ENCODE measurements at regions of chr20 and their contacts with region 1.

Region 1: DNA sequence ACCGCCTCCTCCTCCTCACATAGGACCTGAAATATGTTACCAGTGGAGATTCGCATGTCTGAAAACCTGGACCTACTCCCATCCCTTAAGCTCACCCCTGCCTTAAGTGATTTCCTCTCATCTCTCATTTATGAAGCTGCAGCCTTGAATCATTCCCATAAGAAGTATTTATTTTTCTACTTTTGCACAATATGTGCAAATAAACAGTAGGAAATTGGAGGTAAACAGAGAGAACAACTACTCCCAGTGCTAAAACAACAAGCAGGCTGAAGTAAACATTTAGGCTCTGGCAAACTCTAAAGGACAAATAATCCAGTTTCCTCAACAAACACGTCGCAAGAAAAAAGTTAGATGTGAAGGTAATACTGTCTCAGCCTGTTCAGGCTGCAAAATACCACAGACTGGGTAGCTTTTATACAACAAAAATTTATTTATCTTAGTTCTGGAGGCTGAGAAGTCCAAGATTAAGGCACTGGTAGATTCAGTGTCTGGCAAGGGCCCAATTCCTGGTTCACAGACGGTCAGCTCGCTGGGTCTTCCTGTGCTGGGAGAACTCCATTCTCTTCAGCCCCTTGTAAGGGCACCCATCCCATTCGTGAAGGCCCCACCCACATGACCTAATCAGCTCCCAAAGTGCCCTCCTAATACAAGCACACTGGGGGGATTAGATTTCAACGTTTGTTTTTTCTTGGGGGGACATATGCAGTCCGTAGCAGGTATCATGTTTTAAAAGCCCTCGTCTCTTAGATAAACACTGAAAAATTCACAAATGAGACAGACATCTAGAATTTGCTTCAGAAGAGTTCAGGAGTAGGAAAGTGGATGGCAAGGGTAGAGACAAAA is 15.6 kb downstream of the SPATA2 start:
- DNase-seq: no peak
- ATAC-seq: no peak
- H3K4me3 ChIP-seq: no peak overlapping the region
- H3K27ac ChIP-seq: no peak overlapping the region
- H3K4me1 ChIP-seq: peaks cover 4% of the 10 kb centered on the region
- H3K27me3 ChIP-seq: no peaks in the 10 kb centered on the region
- CTCF ChIP-seq: no peak

Region 2: DNA sequence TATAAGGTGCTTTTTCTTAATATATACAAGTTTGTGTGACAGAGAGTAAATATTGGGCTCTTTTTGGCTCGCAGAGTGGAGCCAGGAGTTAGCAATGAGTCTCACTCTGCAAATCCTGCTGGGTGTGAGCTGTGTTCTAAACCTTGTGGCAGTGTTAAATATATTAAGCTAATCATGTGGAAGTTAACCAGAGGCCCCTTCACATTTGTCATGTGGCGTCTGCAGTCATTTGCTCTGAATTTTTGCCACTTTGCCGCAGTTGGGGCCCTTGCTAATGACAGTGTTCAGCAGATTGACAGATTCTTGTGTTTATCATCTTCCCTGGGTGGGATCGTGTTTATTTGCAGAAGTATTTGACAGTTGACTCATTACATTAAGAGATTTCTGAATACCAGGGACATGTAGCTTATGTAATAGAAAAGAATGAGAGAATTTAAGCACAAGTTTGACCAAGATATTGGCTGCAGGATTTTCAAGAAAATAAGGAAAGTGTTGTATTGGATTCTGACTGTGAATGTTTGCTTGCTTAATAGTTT is 22.3 kb before region 1 on chr20:
- intact Hi-C with region 1: loop called in 1 of 2 experiments (anchors 1 kb)
- DNase-seq: no peak
- ATAC-seq: no peak
- H3K4me3 ChIP-seq: no peak overlapping the region
- H3K27ac ChIP-seq: no peak overlapping the region
- H3K4me1 ChIP-seq: no peaks in the 10 kb centered on the region
- H3K27me3 ChIP-seq: no peaks in the 10 kb centered on the region
- CTCF ChIP-seq: no peak